Endothelial cell of umbilical vein (primary cell): ENCODE measurements at regions of chr10 and their contacts with region 1.

Region 1: GRCh38 chr10:121734589-121735045 is 136.4 kb upstream of the FGFR2 start:
- DNase-seq: no peak
- H3K4me3 ChIP-seq: no peak overlapping the region
- H3K27ac ChIP-seq: no peak overlapping the region
- H3K4me1 ChIP-seq: peaks cover 19% of the 10 kb centered on the region
- H3K27me3 ChIP-seq: no peaks in the 10 kb centered on the region
- CTCF ChIP-seq: peak; percentile 65 to 71
- POLR2A ChIP-seq: no peak

Region 2: GRCh38 chr10:120221873-120222485 is 1512.6 kb before region 1 on chr10:
- CTCF ChIA-PET with region 1: interaction called, 5 read pairs
- POLR2A ChIA-PET with region 1: no interaction called
- dilution Hi-C with region 1: no loop called
- intact Hi-C with region 1: loop called (anchors 10 kb)
- DNase-seq: peak; percentile 64
- H3K4me3 ChIP-seq: no peak overlapping the region
- H3K27ac ChIP-seq: no peak overlapping the region
- H3K4me1 ChIP-seq: no peaks in the 10 kb centered on the region
- H3K27me3 ChIP-seq: no peaks in the 10 kb centered on the region
- CTCF ChIP-seq: peak; percentile 64 to 65
- POLR2A ChIP-seq: no peak

Region 3: DNA sequence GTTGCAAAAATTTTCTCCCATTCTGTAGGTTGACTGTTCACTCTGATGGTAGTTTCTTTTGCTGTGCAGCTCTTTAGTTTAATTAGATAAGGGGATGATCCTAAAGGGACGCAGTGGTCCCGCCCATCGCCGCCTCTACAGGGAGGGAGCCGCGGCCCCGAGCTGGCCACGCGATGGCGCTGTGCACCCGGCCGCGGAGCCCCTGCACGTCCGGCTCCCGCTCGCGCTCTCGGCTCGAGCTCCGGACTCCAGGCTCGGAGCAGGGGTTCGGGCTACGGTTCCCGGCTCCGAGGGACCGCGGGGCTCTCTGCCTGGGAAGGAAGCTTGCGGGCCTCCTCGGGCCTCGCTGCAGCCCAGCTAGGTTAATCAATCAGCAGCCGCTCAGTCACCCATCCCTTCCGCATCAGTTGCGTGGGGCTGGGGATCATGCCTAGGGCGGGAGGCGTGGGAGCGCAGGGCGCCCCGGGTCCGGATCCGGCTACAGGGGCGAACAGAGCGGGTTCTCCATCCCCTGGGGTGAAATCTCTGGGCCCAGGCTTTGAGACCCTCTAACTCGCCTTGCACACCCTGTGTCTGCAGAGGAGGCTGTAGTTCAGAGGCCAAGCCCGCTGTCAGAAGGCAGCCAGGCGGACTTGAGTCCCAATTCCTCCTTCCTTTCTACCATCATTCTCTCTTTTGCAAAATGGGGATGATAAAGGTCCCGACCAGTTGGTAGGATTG is 785.6 kb before region 1 on chr10:
- CTCF ChIA-PET with region 1: interaction called, 17 read pairs
- POLR2A ChIA-PET with region 1: no interaction called
- dilution Hi-C with region 1: no loop called
- intact Hi-C with region 1: loop called (anchors 1 kb)
- DNase-seq: peak; percentile 66
- H3K4me3 ChIP-seq: peak overlapping the region in 2 of 3 experiments; percentile 31 to 36
- H3K27ac ChIP-seq: no peak overlapping the region
- H3K4me1 ChIP-seq: peaks cover 9% of the 10 kb centered on the region
- H3K27me3 ChIP-seq: peaks cover 21 to 28% of the 10 kb centered on the region in 2 experiments
- CTCF ChIP-seq: peak; percentile 85 to 91
- POLR2A ChIP-seq: no peak

Region 4: DNA sequence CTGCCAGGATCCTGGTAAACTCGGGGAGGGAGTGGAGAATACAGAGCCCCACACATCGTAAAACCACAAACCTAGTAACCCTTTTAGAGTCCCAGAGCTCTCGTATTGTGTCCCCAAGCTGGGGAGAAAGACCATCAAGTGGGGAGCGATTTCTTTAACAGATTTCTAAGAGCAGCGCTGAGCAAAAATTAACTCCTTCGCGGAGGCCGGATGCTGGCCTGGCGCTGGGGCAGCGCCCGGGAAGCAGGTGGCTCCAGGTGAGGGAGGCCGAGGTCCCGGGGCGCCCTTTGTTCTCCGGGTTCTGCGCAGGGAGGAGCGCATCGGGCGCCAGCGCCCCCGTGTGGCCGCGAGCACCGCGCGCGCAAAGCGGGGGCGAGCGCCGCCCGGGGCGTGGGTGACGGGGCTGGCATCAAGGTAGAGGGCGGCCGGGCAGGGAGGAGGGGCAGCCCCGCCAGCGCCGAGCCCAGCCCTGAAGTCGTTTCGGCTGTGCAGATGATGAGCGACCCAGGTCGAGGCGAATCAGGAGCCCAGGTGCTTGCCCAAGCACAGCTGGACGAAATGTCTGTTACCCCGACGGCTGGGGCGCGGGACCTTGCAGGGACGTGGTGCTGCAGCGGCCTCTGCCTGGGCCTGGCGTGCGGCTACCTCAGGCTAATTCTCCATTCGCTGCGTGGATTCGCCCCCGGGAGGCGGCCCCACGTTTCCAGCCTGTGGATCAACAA is 126.0 kb before region 1 on chr10:
- CTCF ChIA-PET with region 1: no interaction called
- POLR2A ChIA-PET with region 1: no interaction called
- dilution Hi-C with region 1: no loop called
- intact Hi-C with region 1: loop called (anchors 1 kb)
- DNase-seq: peak; percentile 24
- H3K4me3 ChIP-seq: no peak overlapping the region
- H3K27ac ChIP-seq: no peak overlapping the region
- H3K4me1 ChIP-seq: no peaks in the 10 kb centered on the region
- H3K27me3 ChIP-seq: peaks cover 7 to 11% of the 10 kb centered on the region in 2 experiments
- CTCF ChIP-seq: peak; percentile 72 to 80
- POLR2A ChIP-seq: no peak

Region 5: DNA sequence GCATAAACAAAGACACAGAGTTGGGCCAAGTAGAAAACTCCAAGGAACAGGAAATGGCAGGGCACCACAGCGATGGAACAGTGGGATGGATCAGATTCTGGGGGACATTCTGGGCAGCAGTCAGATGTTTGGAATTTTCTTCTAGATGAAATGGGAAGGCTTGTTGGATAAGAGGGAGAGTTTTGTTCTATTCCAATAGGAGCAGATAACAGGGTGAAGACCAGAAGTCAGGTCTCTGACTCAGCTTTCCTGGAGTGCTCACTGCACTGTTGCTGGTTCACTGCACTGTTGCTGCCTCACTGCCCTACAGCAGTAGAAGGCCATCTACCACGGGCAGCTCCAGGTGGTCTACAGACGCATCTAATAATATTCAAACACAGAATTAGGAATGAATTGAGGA is 57.6 kb after region 1 on chr10:
- CTCF ChIA-PET with region 1: no interaction called
- POLR2A ChIA-PET with region 1: no interaction called
- dilution Hi-C with region 1: no loop called
- intact Hi-C with region 1: loop called (anchors 2 kb)
- DNase-seq: peak; percentile 87
- H3K4me3 ChIP-seq: peak overlapping the region in 1 of 3 experiments; percentile 29
- H3K27ac ChIP-seq: peak overlapping the region; percentile 94
- H3K4me1 ChIP-seq: peaks cover 23% of the 10 kb centered on the region
- H3K27me3 ChIP-seq: no peaks in the 10 kb centered on the region
- CTCF ChIP-seq: no peak
- POLR2A ChIP-seq: peak; percentile 46

Region 6: DNA sequence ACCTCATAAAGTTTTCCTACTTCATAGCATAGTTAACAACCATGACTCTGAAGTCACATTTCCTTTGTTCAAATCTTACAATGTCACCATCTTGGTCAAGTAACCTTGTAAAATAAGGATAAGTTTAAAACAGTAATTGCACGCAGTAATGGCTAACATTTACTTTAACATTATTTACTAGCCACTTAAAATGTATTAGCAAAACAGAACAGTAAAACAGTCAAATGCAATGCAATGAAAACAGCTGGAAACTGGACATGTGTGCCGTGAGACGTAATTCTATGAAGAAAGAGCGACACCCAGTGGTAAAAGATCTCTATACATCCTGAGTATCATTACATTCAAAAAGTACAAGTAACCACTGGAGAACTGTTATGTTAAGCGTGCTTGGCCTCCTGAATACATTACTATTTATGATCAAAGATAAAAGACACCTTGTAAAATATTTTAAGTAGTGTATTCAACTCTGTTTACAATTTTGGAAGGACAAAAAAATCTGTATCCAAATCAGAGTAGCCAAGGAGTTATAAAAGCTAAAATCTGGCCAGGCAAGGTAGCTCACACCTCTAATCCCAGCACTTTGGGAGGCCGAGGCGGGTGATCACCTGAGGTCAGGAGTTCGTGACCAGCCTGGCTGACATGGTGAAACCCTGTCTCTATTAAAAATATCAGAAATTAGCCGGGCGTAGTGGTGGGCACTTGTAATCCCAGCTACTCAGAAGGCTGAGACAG is 166.0 kb after region 1 on chr10:
- CTCF ChIA-PET with region 1: interaction called, 22 read pairs
- POLR2A ChIA-PET with region 1: no interaction called
- dilution Hi-C with region 1: no loop called
- intact Hi-C with region 1: loop called (anchors 2 kb)
- DNase-seq: peak; percentile 78
- H3K4me3 ChIP-seq: no peak overlapping the region
- H3K27ac ChIP-seq: no peak overlapping the region
- H3K4me1 ChIP-seq: no peaks in the 10 kb centered on the region
- H3K27me3 ChIP-seq: no peaks in the 10 kb centered on the region
- CTCF ChIP-seq: peak; percentile 43 to 47
- POLR2A ChIP-seq: no peak

Region 7: GRCh38 chr10:121921238-121921931 is 186.8 kb after region 1 on chr10:
- CTCF ChIA-PET with region 1: no interaction called
- POLR2A ChIA-PET with region 1: no interaction called
- dilution Hi-C with region 1: no loop called
- intact Hi-C with region 1: no loop called
- DNase-seq: no peak
- H3K4me3 ChIP-seq: no peak overlapping the region
- H3K27ac ChIP-seq: no peak overlapping the region
- H3K4me1 ChIP-seq: peaks cover 3% of the 10 kb centered on the region
- H3K27me3 ChIP-seq: no peaks in the 10 kb centered on the region
- CTCF ChIP-seq: no peak
- POLR2A ChIP-seq: no peak